ENCODE measurements at regions of chr12 and their contacts with region 1.

Region 1: GRCh38 chr12:12999959-13000615 is at the start of gene HEBP1:
- DNase-seq: peak; percentile 89
- H3K4me3 Mint-ChIP-seq: peak within 1 kb of the TSS; percentile 96
- H3K27ac Mint-ChIP-seq: peak within 1 kb of the TSS; percentile 84
- H3K4me1 Mint-ChIP-seq: peaks cover 33% of the 10 kb centered on the region
- H3K27me3 Mint-ChIP-seq: no peaks in the 10 kb centered on the region
- CTCF ChIP-seq: no peak
- total RNA-seq, gene HEBP1: 30.8 and 31.2 TPM in 2 replicates

Region 2: DNA sequence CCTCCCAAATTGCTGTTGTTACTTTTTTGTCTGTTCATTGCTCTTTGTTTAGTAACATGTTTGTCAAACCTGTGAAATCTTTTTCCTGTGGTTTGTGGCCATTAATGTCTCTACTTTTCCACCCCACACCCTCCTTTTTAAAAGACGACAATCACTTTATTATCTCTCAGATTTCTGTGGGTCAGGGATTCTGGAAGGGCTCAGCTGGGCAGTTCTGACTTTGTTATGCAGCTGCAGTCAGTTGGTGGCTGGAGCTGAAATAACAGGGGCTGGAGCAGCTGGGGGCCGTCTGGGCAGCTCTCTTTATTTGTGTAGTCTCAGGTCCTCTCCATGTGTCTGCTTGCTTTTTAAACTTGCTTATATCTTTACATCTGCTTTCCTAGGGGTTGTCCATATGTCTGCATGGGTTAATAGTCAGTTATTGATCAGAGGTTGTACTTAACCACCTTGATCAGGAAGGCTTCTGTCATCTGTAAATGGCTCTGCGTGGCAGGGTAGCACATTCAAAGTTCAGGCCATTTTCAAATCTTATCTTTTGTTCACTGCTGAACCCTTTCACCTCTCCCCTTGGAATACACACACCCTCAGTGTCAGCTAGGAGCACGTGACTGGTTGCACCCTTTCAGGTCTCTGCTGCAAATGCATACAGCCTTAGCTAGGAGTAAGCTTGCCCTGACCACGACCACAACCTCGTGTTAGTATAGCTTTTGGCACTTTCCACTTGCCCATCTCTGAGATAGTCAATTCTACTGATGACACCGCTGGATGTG is 615.3 kb before region 1 on chr12:
- CTCF ChIA-PET with region 1: no interaction called
- POLR2A ChIA-PET with region 1: no interaction called
- intact Hi-C with region 1: no loop called
- DNase-seq: no peak
- H3K4me3 Mint-ChIP-seq: no peak overlapping the region
- H3K27ac Mint-ChIP-seq: no peak overlapping the region
- H3K4me1 Mint-ChIP-seq: peaks cover 8% of the 10 kb centered on the region
- H3K27me3 Mint-ChIP-seq: no peaks in the 10 kb centered on the region
- CTCF ChIP-seq: no peak

Region 3: DNA sequence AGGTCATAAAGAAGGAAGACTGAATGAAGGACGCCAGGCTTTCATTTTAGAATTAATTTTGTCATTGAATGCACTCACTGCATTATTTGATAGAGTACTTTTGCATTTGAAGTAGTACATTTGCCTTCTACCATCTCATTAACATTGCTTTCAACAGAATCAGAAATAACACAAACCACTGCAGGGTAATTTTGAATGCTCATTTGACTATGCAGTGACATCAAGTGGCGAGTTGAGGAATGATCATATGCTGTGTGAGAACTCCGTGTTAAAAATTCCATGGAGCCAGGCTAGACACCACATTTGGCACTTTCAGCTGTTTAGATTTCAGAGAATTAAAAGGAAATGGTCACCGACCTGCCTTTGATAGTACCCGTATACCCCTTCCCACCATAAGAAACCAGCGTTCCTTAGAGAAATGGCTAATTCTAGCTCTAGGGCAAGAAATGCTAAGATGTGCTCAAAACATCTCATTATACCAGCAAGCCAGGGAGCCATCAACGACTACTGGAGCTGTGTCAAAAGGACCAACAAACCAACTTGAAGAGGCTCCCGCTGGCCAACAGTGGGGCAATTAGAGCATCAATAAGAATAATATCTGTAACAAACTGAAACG is 16.6 kb before region 1 on chr12:
- CTCF ChIA-PET with region 1: interaction called, 21 read pairs
- POLR2A ChIA-PET with region 1: interaction called, 3 read pairs
- intact Hi-C with region 1: no loop called
- DNase-seq: peak; percentile 65
- H3K4me3 Mint-ChIP-seq: no peak overlapping the region
- H3K27ac Mint-ChIP-seq: peak overlapping the region; percentile 0
- H3K4me1 Mint-ChIP-seq: peaks cover 6% of the 10 kb centered on the region
- H3K27me3 Mint-ChIP-seq: no peaks in the 10 kb centered on the region
- CTCF ChIP-seq: peak; percentile 66

Region 4: GRCh38 chr12:13094347-13094746 is 94.3 kb after region 1 on chr12:
- CTCF ChIA-PET with region 1: interaction called, 4 read pairs
- POLR2A ChIA-PET with region 1: interaction called, 7 read pairs
- intact Hi-C with region 1: loop called (anchors 1 kb)
- DNase-seq: peak; percentile 40
- H3K4me3 Mint-ChIP-seq: peak overlapping the region; percentile 26
- H3K27ac Mint-ChIP-seq: peak overlapping the region; percentile 80
- H3K4me1 Mint-ChIP-seq: peaks cover 47% of the 10 kb centered on the region
- H3K27me3 Mint-ChIP-seq: no peaks in the 10 kb centered on the region
- CTCF ChIP-seq: no peak

Region 5: GRCh38 chr12:13241833-13242488 is 241.9 kb after region 1 on chr12:
- CTCF ChIA-PET with region 1: no interaction called
- POLR2A ChIA-PET with region 1: no interaction called
- intact Hi-C with region 1: no loop called
- DNase-seq: no peak
- H3K4me3 Mint-ChIP-seq: no peak overlapping the region
- H3K27ac Mint-ChIP-seq: no peak overlapping the region
- H3K4me1 Mint-ChIP-seq: peaks cover 7% of the 10 kb centered on the region
- H3K27me3 Mint-ChIP-seq: no peaks in the 10 kb centered on the region
- CTCF ChIP-seq: no peak